Activated CD8-positive, alpha-beta memory T cell treated with anti-CD3 and anti-CD28 coated beads, Interleukin-2, amount 10 ng/mL, durations not matched to agents 7 days and 5 days (primary cell): ENCODE measurements at regions of chr20 and their contacts with region 1.

Region 1: DNA sequence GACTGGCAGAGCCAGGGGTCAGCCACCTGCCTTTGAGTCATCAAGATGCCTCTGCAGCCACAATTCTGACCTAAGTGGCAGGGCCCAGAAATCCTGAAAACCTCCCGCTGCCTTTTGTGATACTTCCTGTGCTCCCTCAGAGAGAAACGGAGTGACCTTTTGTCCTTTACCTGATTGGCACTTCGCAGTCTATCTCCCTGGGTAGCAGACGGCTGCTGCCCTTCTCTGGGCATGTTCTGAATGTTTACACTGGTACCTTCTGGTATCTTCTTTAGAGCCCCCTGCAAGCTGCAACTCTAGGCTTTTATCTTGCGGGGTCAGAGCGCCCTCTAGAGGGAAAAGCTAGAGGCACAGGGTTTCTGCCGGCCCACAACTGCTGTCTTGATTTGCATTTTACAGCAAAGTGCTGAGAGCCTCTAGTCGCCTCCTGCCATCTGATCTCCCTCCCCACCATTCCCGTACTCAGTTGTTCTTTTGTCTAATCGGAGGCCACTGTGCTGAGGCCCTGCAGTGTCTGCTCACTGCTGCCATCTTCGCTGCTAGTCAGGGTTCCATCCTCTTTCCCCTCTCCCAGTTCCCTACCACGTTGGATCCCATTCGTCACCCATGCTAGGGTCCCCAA is 26.9 kb downstream of the SPATA2 start:
- DNase-seq: peak; percentile 73
- ATAC-seq: peak; percentile 48
- H3K4me3 Mint-ChIP-seq: no peak overlapping the region
- H3K27ac Mint-ChIP-seq: peak overlapping the region; percentile 29
- H3K4me1 Mint-ChIP-seq: peaks cover 40% of the 10 kb centered on the region
- H3K27me3 Mint-ChIP-seq: no peaks in the 10 kb centered on the region

Region 2: DNA sequence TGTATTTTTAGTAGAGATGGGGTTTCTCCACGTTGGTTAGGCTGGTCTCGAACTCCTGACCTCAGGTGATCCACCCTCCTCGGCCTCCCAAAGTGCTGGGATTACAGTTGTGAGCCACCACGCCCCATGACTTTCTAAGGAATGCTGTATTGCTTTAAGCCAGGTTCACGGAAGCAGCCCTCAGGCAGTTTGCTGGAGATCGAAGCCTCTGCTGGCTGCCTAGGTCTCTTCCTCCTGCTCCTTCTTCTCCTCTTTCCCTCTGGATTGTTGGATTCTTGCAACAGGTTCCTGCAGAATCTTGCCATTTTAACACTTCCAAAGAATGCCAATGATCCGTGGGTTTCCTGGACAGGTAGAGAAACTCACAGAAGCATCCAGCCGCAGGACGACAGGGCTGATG is 145.5 kb before region 1 on chr20:
- CTCF ChIA-PET with region 1: no interaction called
- DNase-seq: no peak
- ATAC-seq: no peak
- H3K4me3 Mint-ChIP-seq: no peak overlapping the region
- H3K27ac Mint-ChIP-seq: no peak overlapping the region
- H3K4me1 Mint-ChIP-seq: no peaks in the 10 kb centered on the region
- H3K27me3 Mint-ChIP-seq: peaks cover 7% of the 10 kb centered on the region

Region 3: GRCh38 chr20:49846206-49846807 is 42.1 kb before region 1 on chr20:
- CTCF ChIA-PET with region 1: interaction called, 10 read pairs
- DNase-seq: peak; percentile 64
- ATAC-seq: peak; percentile 80
- H3K4me3 Mint-ChIP-seq: no peak overlapping the region
- H3K27ac Mint-ChIP-seq: no peak overlapping the region
- H3K4me1 Mint-ChIP-seq: peaks cover 8% of the 10 kb centered on the region
- H3K27me3 Mint-ChIP-seq: no peaks in the 10 kb centered on the region

Region 4: GRCh38 chr20:49905415-49906091 is 17.1 kb after region 1 on chr20:
- CTCF ChIA-PET with region 1: interaction called, 12 read pairs
- DNase-seq: no peak
- ATAC-seq: no peak
- H3K4me3 Mint-ChIP-seq: no peak overlapping the region
- H3K27ac Mint-ChIP-seq: no peak overlapping the region
- H3K4me1 Mint-ChIP-seq: no peaks in the 10 kb centered on the region
- H3K27me3 Mint-ChIP-seq: no peaks in the 10 kb centered on the region

Region 5: GRCh38 chr20:49915378-49916145 is 27.1 kb after region 1 on chr20 and contains the start of gene SPATA2:
- CTCF ChIA-PET with region 1: interaction called, 21 read pairs
- DNase-seq: peak; percentile 97
- ATAC-seq: peak; percentile 81
- H3K4me3 Mint-ChIP-seq: peak within 1 kb of the TSS; percentile 100
- H3K27ac Mint-ChIP-seq: peak within 1 kb of the TSS; percentile 100
- H3K4me1 Mint-ChIP-seq: peaks cover 37% of the 10 kb centered on the region
- H3K27me3 Mint-ChIP-seq: no peaks in the 10 kb centered on the region
- total RNA-seq, gene SPATA2: 10.2 to 11.1 TPM

Region 6: GRCh38 chr20:49936153-49937027 is 47.9 kb after region 1 on chr20 and contains the start of gene RNF114:
- CTCF ChIA-PET with region 1: interaction called, 10 read pairs
- DNase-seq: peak; percentile 92
- ATAC-seq: peak; percentile 89
- H3K4me3 Mint-ChIP-seq: peak within 1 kb of the TSS; percentile 94
- H3K27ac Mint-ChIP-seq: peak within 1 kb of the TSS; percentile 93
- H3K4me1 Mint-ChIP-seq: peaks cover 49% of the 10 kb centered on the region
- H3K27me3 Mint-ChIP-seq: no peaks in the 10 kb centered on the region
- total RNA-seq, gene RNF114: 65.2 to 74.4 TPM